Psoas muscle (tissue), 8 donors: ENCODE measurements at regions of chr12 and their contacts with region 1.

Region 1: GRCh38 chr12:15276088-15276698 is 46.1 kb upstream of the PTPRO start:
- DNase-seq: no peak
- ATAC-seq: peak in 3 of 4 donors; percentile 29 to 66 (median 35)
- H3K4me3 ChIP-seq: no peak overlapping the region
- H3K27ac ChIP-seq: no peak overlapping the region
- H3K4me1 ChIP-seq: peaks cover 13% of the 10 kb centered on the region
- H3K27me3 ChIP-seq: no peaks in the 10 kb centered on the region
- CTCF ChIP-seq: peak; percentile 79

Region 2: DNA sequence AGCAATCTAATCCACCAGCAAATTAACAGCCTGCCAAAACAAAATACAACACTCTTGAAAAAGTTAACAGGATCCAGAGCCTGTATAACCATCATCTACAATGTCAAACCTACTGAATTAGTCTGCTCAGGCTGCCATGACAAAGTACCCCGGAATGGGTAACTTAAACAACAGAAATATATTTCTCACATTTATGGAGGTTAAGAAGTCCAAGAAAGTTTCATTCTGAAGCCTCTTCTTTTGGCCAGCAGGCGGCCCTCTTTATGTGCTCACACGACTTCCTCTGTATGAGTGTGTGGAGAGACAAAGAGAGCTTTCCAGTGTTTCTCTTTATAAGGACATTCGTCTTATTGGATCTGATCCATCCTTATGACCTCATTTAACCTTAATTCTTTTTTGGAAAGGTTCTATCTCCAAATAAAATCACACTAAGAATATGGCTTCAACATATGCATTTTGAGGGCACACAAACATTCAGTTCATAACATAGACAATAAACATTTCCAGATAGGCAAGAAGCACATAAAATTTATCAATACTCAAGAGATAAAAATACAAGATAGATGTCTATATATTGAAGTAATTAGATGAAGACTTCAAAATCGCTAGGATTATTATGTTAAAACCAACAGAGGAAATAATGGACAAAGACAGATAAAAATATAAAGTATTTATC is 49.1 kb before region 1 on chr12:
- intact Hi-C with region 1: loop called in 1 of 2 experiments (anchors 2 kb)
- DNase-seq: peak; percentile 46 to 56
- ATAC-seq: peak in 3 of 4 donors; percentile 48 to 65 (median 64)
- H3K4me3 ChIP-seq: no peak overlapping the region
- H3K27ac ChIP-seq: no peak overlapping the region
- H3K4me1 ChIP-seq: no peaks in the 10 kb centered on the region
- H3K27me3 ChIP-seq: peaks cover 0 to 2% (median 0%) of the 10 kb centered on the region in 3 donors
- CTCF ChIP-seq: peak; percentile 66

Region 3: DNA sequence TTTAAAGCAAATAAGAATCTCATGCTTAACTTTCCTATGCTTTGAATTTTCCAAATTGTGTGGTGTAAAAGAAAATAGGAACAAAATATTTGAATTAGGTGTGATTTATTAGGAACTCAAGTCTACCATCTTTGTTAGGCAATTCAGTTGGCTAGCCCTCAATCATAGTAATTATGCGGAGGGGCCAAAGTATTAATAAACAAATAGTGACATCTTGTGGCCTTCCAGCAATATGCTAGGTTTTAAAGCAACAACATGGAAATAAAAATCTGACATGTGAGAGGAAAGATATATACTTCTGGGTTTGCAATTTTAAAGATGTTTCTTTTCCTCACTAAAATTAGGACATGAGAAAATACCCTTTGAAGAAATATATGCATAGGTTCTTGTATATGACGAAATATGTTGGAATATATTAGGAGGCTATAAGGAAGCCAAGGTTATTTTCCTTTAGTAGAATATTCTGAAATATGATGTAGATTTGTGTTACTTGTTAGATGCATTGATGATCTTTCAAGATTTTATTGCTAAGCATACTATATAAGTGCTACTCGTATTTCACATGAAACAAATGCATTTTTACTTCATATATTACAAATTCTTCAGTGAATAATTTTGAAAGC is 246.5 kb after region 1 on chr12:
- intact Hi-C with region 1: loop called (anchors 2 to 5 kb)
- DNase-seq: no peak
- ATAC-seq: peak in 2 of 4 donors; percentile 52 to 74
- H3K4me3 ChIP-seq: no peak overlapping the region
- H3K27ac ChIP-seq: no peak overlapping the region
- H3K4me1 ChIP-seq: no peaks in the 10 kb centered on the region
- H3K27me3 ChIP-seq: peaks cover 0 to 4% (median 0%) of the 10 kb centered on the region in 3 donors
- CTCF ChIP-seq: peak; percentile 51

Region 4: DNA sequence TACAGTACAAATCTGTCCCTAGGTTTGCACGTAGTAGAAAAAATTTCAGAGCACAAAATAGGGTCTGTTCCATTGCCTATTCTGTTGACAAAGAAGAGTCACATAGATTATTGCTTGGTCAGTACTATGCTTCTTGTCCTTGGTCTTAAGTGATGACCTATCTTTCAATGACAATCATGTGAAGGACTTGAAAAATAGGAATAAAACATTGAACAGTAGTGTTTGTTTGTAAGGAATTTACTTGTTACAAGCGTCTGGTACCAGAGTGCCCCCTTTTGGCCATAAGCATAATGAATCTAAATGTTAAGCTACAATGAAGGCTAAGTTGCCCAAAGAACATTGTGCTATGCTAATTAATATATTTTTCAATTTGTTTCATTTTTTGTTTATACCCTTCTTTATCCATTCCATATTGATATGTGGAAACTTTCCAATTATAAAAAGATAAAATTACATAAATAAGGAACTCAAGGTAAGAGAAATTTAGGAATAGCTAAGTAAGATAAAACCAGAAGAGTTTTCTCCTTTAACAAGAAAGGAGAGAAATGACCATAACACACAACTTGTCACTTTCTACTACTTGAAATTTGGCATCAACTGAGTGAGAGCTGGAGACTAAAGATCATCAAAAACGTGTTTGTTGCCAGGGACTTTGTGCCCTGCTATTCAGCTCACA is 308.3 kb after region 1 on chr12:
- intact Hi-C with region 1: loop called (anchors 2 to 5 kb)
- DNase-seq: no peak
- ATAC-seq: no peak
- H3K4me3 ChIP-seq: no peak overlapping the region
- H3K27ac ChIP-seq: no peak overlapping the region
- H3K4me1 ChIP-seq: no peaks in the 10 kb centered on the region
- H3K27me3 ChIP-seq: no peaks in the 10 kb centered on the region
- CTCF ChIP-seq: peak; percentile 63

Region 5: GRCh38 chr12:15856097-15856982 is 580.1 kb after region 1 on chr12:
- intact Hi-C with region 1: loop called in 1 of 2 experiments (anchors 5 kb)
- DNase-seq: no peak
- ATAC-seq: peak; percentile 52 to 88 (median 66)
- H3K4me3 ChIP-seq: no peak overlapping the region
- H3K27ac ChIP-seq: no peak overlapping the region
- H3K4me1 ChIP-seq: no peaks in the 10 kb centered on the region
- H3K27me3 ChIP-seq: no peaks in the 10 kb centered on the region
- CTCF ChIP-seq: peak; percentile 91

Region 6: DNA sequence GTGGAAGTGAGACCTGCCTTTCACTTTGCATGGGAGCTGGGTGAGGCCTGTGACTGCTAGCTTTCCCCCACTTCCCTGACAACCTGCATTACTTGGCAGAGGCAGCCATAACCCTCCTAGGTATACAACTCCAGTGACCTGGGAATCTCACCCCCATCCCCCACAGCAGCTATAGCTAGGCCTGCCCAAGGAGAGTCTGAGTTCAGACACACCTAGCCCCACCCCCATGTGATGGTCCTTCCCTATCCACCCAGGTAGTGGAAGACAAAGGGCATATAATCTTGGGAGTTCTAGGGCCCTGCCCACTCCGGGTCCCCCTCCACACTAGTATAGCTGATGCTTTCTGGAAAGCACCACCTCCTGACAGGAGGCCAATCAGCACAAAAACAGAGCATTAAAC is 599.7 kb after region 1 on chr12:
- intact Hi-C with region 1: loop called in 1 of 2 experiments (anchors 5 kb)
- DNase-seq: no peak
- ATAC-seq: no peak
- H3K4me3 ChIP-seq: no peak overlapping the region
- H3K27ac ChIP-seq: no peak overlapping the region
- H3K4me1 ChIP-seq: no peaks in the 10 kb centered on the region
- H3K27me3 ChIP-seq: no peaks in the 10 kb centered on the region
- CTCF ChIP-seq: no peak